GM10248 (cell line): ENCODE measurements at regions of chr18 and their contacts with region 1.

Region 1: DNA sequence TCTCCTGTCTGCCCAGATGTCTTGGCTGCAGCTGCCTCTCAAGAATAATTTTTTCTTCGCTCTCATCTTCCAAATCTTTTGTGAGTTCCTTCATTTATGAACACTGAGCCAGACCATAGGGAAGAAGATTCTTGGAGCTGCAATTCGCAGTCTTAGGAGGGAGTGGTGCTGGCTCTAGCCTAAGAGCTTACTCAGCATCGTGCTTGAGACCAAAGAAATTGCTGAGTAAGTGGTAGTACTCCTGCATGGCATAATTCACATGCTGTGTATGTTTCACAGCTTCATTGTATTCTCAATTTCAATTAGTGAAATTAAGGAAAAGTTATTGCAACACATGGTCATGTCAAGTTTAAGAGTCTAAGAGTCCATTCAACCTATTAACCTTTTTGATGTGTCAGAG is 771.7 kb downstream of the ADCYAP1 start:
- DNase-seq: no peak
- CTCF ChIP-seq: no peak

Region 2: GRCh38 chr18:1663879-1664705 is 12.3 kb before region 1 on chr18:
- CTCF ChIA-PET with region 1: interaction called, 16 read pairs
- POLR2A ChIA-PET with region 1: no interaction called
- DNase-seq: peak; percentile 3
- CTCF ChIP-seq: peak; percentile 47